Posterior vena cava (tissue), 2 donors: ENCODE measurements at regions of chr1 and their contacts with region 1.

Region 1: DNA sequence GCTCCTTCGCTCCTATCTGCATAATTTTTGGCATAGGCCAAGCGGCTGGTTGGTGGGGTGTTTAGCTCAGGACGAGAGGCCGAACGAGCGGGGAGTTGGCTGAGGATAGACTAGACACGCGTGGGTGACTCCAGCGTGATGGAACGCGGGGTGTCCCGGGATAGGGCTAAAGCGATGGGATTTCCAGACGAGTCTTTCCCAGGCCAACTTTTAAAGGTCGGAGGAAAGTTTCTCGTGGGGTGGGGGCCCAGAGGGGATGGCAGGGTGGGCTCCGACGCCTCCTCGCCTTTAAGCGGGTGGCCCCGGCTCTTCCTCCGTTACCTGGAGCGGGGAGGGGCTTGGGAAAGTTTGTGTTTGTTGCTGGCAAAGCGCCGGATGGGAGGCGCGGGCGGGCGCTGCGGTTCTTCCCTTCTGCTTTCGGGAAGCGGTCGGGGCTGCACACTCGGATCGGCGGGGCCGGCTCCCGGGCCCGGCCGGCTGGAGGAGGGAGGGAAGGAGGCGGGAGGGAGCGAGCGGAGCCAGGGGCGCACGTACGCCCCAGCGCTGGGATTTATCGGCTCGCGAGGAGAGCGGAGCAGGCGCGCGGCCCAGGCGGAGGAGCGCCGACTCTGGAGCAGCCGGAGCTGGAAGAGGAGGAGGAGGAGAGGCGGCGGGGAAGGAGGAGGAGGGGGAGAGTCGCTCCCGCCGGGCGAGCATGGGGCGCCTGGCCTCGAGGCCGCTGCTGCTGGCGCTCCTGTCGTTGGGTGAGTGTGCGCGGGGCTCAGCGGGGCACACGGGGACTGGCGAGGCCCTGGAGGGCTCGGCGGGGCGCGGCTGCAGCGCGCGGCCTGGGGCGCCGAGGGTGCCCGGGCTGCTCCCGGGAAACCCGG is at the start of gene PTGFRN:
- DNase-seq: peak; percentile 93
- total RNA-seq, gene PTGFRN: 99.4 to 153 TPM

Region 2: GRCh38 chr1:115302390-115302961 is 1607.3 kb before region 1 on chr1:
- intact Hi-C with region 1: no loop called
- DNase-seq: no peak

Region 3: DNA sequence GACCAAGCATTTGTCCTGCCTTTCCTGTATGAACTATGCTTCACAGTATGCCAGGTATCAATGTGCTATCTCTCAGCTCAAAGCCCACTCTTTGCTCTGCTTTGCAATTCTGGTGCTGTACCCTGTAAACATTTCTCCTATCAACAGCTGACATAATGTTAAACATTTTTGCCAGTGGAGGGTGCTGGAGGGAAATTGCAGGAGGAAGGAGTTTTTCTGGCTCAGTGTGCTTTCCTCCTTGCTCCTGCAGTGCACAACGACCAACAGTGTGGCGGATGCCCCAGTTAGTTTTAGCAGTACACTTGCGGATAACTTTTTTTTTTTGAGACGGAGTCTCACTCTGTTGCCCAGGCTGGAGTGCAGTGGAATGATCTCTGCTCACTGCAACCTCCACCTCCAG is 67.1 kb before region 1 on chr1:
- intact Hi-C with region 1: no loop called
- DNase-seq: no peak

Region 4: GRCh38 chr1:116853670-116854402 is 55.9 kb before region 1 on chr1:
- intact Hi-C with region 1: loop called in 1 of 2 experiments (anchors 10 kb)
- DNase-seq: no peak

Region 5: GRCh38 chr1:116870300-116870699 is 39.4 kb before region 1 on chr1:
- intact Hi-C with region 1: loop called in 1 of 2 experiments (anchors 1 kb)
- DNase-seq: no peak

Region 6: DNA sequence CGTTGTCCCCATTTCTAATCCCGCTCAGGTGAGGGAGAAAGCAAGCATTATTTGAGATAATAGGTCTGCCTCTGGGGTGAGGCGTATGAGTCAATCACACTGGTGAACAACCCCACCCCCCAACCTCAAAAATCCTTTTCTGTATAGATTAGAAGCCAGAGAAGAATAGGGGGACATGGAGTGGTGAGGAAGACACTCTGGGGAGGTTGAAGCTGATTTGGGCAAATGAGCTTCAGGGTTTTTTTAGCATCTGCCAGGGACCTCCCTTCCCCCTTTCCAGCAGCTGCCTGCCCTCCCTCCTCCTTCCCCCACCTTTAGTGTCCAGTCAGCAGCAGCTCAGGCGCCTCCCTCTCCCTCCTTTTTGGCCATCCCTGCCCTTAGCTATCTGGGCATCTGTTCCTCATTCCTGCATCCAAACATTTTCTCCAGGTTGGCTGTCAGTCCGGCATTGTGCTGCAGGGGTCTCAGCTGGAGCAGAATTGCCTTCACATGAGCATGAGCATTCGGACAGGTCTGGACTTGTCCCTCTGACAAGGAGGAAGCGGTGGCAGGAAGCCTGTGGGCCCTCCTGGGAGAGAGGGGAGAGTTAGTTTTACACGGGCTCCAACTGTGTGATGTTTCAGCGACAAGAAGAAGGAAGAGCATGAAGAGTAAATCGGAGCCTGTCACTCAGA is 30.8 kb before region 1 on chr1:
- intact Hi-C with region 1: loop called in 1 of 2 experiments (anchors 1 kb)
- DNase-seq: no peak

Region 7: GRCh38 chr1:116951200-116951935 is 41.6 kb after region 1 on chr1:
- intact Hi-C with region 1: loop called in 1 of 2 experiments (anchors 5 kb)
- DNase-seq: peak; percentile 83

Region 8: DNA sequence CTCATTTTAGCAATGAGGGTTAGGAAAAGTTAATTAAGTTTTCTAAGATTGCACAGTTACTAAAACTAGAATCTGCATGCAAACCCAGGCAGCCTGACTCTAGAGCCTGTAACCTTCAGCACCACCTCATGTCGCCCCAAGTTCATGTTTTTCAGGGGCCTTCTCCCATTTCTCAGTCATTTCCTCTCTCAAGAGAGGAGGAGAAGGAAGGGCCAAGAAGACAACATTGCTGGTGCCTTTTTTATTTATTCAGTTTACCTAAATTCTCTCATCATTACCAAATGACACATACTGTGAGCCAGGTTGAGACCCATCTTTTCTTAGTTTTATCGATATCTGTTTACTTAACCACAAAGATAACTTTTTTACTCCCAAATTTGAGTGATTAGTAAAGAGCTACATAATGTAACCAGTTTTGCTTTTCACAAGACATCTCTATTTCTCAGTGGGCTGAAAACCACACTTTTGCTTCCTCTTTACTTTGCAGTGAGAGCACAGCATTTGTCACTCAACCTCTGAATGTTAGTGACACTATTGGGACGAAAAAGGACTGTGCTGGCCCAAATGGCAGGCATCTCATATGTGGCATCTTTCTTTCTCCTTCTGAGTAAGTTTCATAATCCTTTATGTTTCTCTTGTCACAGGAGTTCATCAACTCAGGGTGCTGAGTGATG is 91.6 kb after region 1 on chr1 and contains the start of gene CD101:
- intact Hi-C with region 1: no loop called
- DNase-seq: no peak
- total RNA-seq, gene CD101: 2.1 to 2.6 TPM

Region 9: GRCh38 chr1:117096871-117097842 is 187.4 kb after region 1 on chr1:
- intact Hi-C with region 1: no loop called
- DNase-seq: no peak